ENCODE measurements at regions of chr17 and their contacts with region 1.

Region 1: GRCh38 chr17:66951935-66952662 is 12.4 kb upstream of the CACNG4 start:
- DNase-seq: peak; percentile 96 to 97
- H3K4me3 ChIP-seq: no peak overlapping the region
- H3K4me3 Mint-ChIP-seq: peak overlapping the region; percentile 72
- H3K27ac Mint-ChIP-seq: peak overlapping the region; percentile 99
- H3K4me1 ChIP-seq: peaks cover 45% of the 10 kb centered on the region
- H3K4me1 Mint-ChIP-seq: peaks cover 34% of the 10 kb centered on the region
- H3K27me3 ChIP-seq: no peaks in the 10 kb centered on the region
- H3K27me3 Mint-ChIP-seq: no peaks in the 10 kb centered on the region
- CTCF ChIP-seq: no peak

Region 2: GRCh38 chr17:66915204-66916096 is 36.6 kb before region 1 on chr17:
- CTCF ChIA-PET with region 1: interaction called, 4 read pairs
- POLR2A ChIA-PET with region 1: no interaction called
- intact Hi-C with region 1: loop called (anchors 2 kb)
- DNase-seq: peak in 1 of 2 experiments; percentile 58
- H3K4me3 ChIP-seq: no peak overlapping the region
- H3K4me3 Mint-ChIP-seq: no peak overlapping the region
- H3K27ac Mint-ChIP-seq: no peak overlapping the region
- H3K4me1 ChIP-seq: no peaks in the 10 kb centered on the region
- H3K4me1 Mint-ChIP-seq: peaks cover 8% of the 10 kb centered on the region
- H3K27me3 ChIP-seq: no peaks in the 10 kb centered on the region
- H3K27me3 Mint-ChIP-seq: no peaks in the 10 kb centered on the region
- CTCF ChIP-seq: peak; percentile 25 to 66

Region 3: GRCh38 chr17:66923886-66924285 is 28.2 kb before region 1 on chr17:
- CTCF ChIA-PET with region 1: interaction called, 3 read pairs
- POLR2A ChIA-PET with region 1: interaction called, 4 read pairs
- intact Hi-C with region 1: loop called (anchors 1 kb)
- DNase-seq: peak in 1 of 2 experiments; percentile 50
- H3K4me3 ChIP-seq: no peak overlapping the region
- H3K4me3 Mint-ChIP-seq: peak overlapping the region; percentile 15
- H3K27ac Mint-ChIP-seq: peak overlapping the region; percentile 47
- H3K4me1 ChIP-seq: peaks cover 24% of the 10 kb centered on the region
- H3K4me1 Mint-ChIP-seq: peaks cover 13% of the 10 kb centered on the region
- H3K27me3 ChIP-seq: no peaks in the 10 kb centered on the region
- H3K27me3 Mint-ChIP-seq: no peaks in the 10 kb centered on the region
- CTCF ChIP-seq: no peak

Region 4: GRCh38 chr17:66964930-66965800 is 13.1 kb after region 1 on chr17:
- CTCF ChIA-PET with region 1: interaction called, 3 read pairs
- POLR2A ChIA-PET with region 1: no interaction called
- intact Hi-C with region 1: loop called (anchors 1 kb)
- DNase-seq: peak; percentile 75 to 81
- H3K4me3 ChIP-seq: peak overlapping the region; percentile 66
- H3K4me3 Mint-ChIP-seq: peak overlapping the region; percentile 69
- H3K27ac Mint-ChIP-seq: no peak overlapping the region
- H3K4me1 ChIP-seq: peaks cover 38% of the 10 kb centered on the region
- H3K4me1 Mint-ChIP-seq: peaks cover 25% of the 10 kb centered on the region
- H3K27me3 ChIP-seq: no peaks in the 10 kb centered on the region
- H3K27me3 Mint-ChIP-seq: no peaks in the 10 kb centered on the region
- CTCF ChIP-seq: no peak